Caco-2 (cell line): ENCODE measurements at regions of chr2 and their contacts with region 1.

Region 1: DNA sequence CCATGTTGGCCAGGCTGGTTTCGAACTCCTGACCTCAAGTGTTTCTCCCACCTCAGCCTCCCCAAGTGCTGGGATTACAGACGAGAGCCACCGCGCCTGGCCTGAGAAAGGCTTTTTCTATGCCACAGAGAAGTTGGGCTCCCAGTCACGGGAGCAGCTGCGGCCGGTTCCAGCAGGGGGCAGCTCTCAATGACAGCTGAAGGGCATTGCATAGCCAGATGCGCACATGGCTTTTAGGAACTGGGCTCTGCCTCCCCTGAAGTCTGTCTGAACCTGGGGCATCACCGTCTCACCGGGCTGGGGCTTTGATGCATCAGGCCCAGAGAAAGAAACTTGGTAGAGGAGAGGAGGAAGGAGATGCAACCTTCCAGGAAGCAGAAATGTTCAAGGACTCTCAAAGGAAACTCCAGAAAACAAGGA is 84.2 kb upstream of the LAPTM4A start:
- DNase-seq: peak; percentile 64 to 80
- H3K4me3 ChIP-seq: no peak overlapping the region
- H3K4me3 Mint-ChIP-seq: no peak overlapping the region
- H3K27ac Mint-ChIP-seq: no peak overlapping the region
- H3K4me1 ChIP-seq: no peaks in the 10 kb centered on the region; the same call in 1 of the 2 replicates
- H3K4me1 Mint-ChIP-seq: peaks cover 21% of the 10 kb centered on the region
- H3K27me3 ChIP-seq: no peaks in the 10 kb centered on the region
- H3K27me3 Mint-ChIP-seq: peaks cover 3% of the 10 kb centered on the region
- CTCF ChIP-seq: peak; percentile 77 to 91

Region 2: GRCh38 chr2:20145497-20146193 is 10.0 kb after region 1 on chr2:
- CTCF ChIA-PET with region 1: no interaction called
- POLR2A ChIA-PET with region 1: no interaction called
- intact Hi-C with region 1: no loop called
- DNase-seq: peak in 1 of 2 experiments; percentile 61
- H3K4me3 ChIP-seq: no peak overlapping the region
- H3K4me3 Mint-ChIP-seq: no peak overlapping the region
- H3K27ac Mint-ChIP-seq: no peak overlapping the region
- H3K4me1 ChIP-seq: no peaks in the 10 kb centered on the region
- H3K4me1 Mint-ChIP-seq: peaks cover 7% of the 10 kb centered on the region
- H3K27me3 ChIP-seq: no peaks in the 10 kb centered on the region
- H3K27me3 Mint-ChIP-seq: no peaks in the 10 kb centered on the region
- CTCF ChIP-seq: no peak

Region 3: DNA sequence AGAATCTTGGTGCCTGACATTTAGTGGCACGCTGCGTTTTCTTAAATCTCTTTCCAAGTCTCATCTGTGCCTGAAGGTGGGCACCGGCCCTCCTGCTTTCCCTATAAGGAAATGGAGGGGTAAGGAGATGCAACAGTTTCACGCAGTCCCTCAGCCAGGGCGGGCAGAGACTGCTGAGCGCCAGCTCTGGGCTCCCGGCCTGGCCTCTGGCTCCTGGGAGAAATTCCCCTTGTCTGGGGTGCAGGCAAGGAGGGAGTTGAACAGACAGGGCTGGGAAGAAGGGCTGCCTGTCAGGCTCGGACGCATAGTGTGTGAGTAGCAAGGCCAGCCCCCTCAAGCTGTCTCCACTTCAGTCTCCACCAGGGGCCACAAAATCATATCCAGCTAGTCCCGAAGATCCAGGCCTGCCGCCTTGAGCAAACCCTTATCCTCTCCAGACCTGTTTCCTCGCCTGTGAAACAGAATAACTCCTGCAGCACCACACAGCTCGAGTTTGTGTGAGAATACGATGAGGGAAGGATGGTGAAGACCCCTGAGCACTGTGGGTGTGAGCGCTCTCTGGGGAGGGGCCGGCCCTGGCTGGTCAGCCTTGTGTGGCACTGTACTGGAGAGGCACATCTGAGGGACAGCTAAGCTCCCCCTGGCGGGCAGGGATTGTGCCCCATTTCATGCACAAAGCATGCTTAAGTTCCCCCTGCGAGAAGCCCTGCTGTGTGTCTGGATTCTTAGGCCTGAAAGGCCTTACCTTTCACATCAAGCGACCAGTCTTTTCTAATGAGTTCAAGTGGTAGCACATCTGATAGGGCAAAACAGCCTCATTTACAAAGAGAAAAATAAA is 55.5 kb after region 1 on chr2:
- CTCF ChIA-PET with region 1: interaction called, 7 read pairs
- POLR2A ChIA-PET with region 1: no interaction called
- intact Hi-C with region 1: loop called (anchors 2 kb)
- DNase-seq: peak; percentile 69 to 75
- H3K4me3 ChIP-seq: no peak overlapping the region
- H3K4me3 Mint-ChIP-seq: no peak overlapping the region
- H3K27ac Mint-ChIP-seq: no peak overlapping the region
- H3K4me1 ChIP-seq: peaks cover 21% of the 10 kb centered on the region
- H3K4me1 Mint-ChIP-seq: peaks cover 23% of the 10 kb centered on the region
- H3K27me3 ChIP-seq: no peaks in the 10 kb centered on the region
- H3K27me3 Mint-ChIP-seq: no peaks in the 10 kb centered on the region
- CTCF ChIP-seq: peak; percentile 55 to 76

Region 4: DNA sequence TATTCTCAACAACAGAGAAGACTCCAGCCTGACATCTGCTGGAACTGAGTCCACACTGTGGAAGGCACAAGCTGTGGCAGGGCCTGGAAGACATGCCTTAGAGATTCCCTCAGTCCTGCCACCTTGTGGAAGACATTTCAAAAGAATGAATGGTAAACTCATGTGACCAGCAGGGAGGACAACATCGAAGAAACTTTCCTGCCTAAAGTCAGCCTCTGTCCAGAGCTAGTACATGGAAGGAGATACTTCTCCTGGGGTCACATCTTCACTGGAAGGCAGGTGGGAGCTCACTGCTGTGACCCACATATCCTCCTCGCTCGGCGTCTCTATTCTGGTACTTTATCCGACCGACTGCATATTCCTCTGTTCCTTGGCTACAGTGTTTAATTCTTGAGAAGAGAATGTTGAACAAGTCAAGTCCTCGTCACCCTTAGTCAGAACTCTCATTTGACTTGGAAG is 155.5 kb after region 1 on chr2:
- CTCF ChIA-PET with region 1: interaction called, 5 read pairs
- POLR2A ChIA-PET with region 1: no interaction called
- intact Hi-C with region 1: loop called (anchors 1 kb)
- DNase-seq: peak; percentile 83 to 86
- H3K4me3 ChIP-seq: no peak overlapping the region
- H3K4me3 Mint-ChIP-seq: no peak overlapping the region
- H3K27ac Mint-ChIP-seq: no peak overlapping the region
- H3K4me1 ChIP-seq: peaks cover 11% of the 10 kb centered on the region
- H3K4me1 Mint-ChIP-seq: peaks cover 7% of the 10 kb centered on the region
- H3K27me3 ChIP-seq: no peaks in the 10 kb centered on the region
- H3K27me3 Mint-ChIP-seq: no peaks in the 10 kb centered on the region
- CTCF ChIP-seq: peak; percentile 77 to 80